BJ (cell line): ENCODE measurements at regions of chr1 and their contacts with region 1.

Region 1: DNA sequence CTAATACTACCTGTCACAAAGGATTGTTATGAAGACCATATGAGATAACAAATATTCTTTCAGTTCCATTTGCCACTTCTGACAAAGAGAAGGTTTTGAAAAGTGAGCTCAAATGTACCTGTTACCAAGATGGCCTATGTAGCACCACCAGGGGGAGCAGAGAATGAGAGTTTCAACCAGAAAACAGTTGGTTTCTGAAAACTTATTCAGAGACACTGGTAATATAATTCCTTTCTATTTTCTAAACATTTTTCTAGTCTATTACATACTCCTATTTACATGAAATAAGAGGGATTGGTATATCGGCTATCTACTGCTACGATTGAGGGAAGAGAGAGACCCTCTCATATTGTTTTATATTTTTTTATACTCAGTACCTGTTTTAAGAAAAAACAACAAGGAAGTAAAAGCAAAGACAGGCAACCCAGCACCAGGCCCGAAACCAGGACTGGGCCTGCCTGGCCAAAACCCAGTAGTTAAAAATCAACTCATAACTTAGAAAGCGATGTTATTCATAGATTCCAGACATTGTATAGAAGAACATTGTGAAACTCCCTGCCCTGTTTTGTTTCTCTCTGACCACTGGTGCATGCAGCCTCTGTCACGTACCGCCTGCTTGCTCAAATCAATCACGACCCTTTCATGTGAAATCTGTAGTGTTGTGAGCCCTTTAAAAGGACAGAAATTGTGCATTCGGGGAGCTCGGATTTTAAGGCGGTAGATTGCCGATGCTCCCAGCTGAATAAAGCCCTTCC is 48.3 kb downstream of the IL23R start:
- DNase-seq: no peak
- H3K4me3 ChIP-seq: no peak overlapping the region
- H3K27me3 ChIP-seq: no peaks in the 10 kb centered on the region
- CTCF ChIP-seq: peak; percentile 66

Region 2: GRCh38 chr1:66764994-66765578 is 449.5 kb before region 1 on chr1:
- CTCF ChIA-PET with region 1: interaction called, 58 read pairs
- POLR2A ChIA-PET with region 1: no interaction called
- DNase-seq: no peak
- H3K4me3 ChIP-seq: no peak overlapping the region
- H3K27me3 ChIP-seq: no peaks in the 10 kb centered on the region
- CTCF ChIP-seq: peak; percentile 70

Region 3: GRCh38 chr1:66996018-66996682 is 218.4 kb before region 1 on chr1:
- CTCF ChIA-PET with region 1: interaction called, 16 read pairs
- POLR2A ChIA-PET with region 1: no interaction called
- DNase-seq: no peak
- H3K4me3 ChIP-seq: no peak overlapping the region
- H3K27me3 ChIP-seq: no peaks in the 10 kb centered on the region
- CTCF ChIP-seq: peak; percentile 84

Region 4: GRCh38 chr1:67201891-67202290 is 12.7 kb before region 1 on chr1:
- CTCF ChIA-PET with region 1: interaction called, 24 read pairs
- POLR2A ChIA-PET with region 1: interaction called, 5 read pairs
- DNase-seq: no peak
- H3K4me3 ChIP-seq: no peak overlapping the region
- H3K27me3 ChIP-seq: 0 out of 2 replicates have a peak, but pooled peaks cover 1% of the 10 kb centered on the region
- CTCF ChIP-seq: no peak

Region 5: DNA sequence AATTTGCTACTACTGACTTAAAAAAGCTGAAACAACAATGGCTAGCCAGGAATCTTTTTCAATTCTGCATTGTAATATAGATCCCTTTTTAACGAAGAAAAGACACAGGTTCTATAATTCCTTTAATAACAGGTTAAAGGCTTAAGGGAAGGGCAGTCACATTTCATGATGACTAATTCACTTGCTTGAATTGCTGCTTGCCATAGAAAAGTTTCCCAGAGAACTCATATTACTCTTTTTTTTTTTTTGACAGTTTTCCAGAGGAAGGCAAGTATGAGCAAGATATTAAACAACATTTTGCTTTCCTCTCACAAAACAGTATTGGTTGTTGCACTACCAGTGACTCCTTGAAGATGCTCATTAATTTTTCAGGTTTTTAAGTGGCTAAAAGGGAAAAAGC is 12.6 kb after region 1 on chr1:
- CTCF ChIA-PET with region 1: interaction called, 22 read pairs
- POLR2A ChIA-PET with region 1: no interaction called
- DNase-seq: no peak
- H3K4me3 ChIP-seq: no peak overlapping the region
- H3K27me3 ChIP-seq: no peaks in the 10 kb centered on the region
- CTCF ChIP-seq: no peak

Region 6: GRCh38 chr1:67489643-67490042 is 275.0 kb after region 1 on chr1:
- CTCF ChIA-PET with region 1: interaction called, 13 read pairs
- POLR2A ChIA-PET with region 1: no interaction called
- DNase-seq: no peak
- H3K4me3 ChIP-seq: no peak overlapping the region
- H3K27me3 ChIP-seq: peaks cover 3% of the 10 kb centered on the region; the same call in 1 of the 2 replicates
- CTCF ChIP-seq: peak; percentile 16; the same call in 1 of the 2 replicates